Upper lobe of right lung (tissue), 1 donor: ENCODE measurements at regions of chr9 and their contacts with region 1.

Region 1: DNA sequence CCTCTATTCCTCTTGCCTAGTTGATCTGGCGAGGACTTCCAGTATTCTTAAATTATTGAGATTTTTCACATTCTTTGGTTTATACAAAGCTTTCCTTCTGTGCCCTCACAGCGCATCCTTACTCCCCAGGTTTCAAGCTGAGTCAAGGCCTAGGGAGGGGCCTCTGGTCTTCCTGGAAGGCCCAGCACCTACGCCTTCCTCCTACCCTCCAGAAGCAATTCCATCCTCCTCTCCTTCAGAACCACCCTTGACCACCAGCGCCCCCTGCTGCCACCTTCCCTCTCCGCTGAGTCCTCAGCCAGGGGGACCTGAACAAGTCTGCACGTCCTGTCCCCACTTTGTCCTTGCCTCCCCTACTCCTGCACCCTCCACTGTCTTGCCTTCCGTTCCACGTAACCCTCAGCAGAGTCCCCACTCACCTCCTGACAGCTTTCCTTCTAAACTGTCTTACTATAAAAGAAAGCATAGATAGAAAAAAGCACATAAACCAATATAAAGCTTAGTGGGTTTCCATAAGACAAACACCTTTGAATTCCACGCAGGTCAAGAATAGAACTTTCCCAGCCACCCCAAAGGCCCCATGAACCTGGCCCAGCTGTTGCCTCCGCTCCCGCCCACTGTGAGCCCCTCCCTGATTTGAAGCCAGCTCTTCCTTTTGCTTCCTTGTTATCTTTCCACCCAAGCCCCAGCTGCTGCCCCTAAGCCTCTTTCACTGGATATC is 63.0 kb upstream of the CTSL start:
- DNase-seq: peak; percentile 91
- ATAC-seq: peak; percentile 89
- H3K4me3 ChIP-seq: no peak overlapping the region
- H3K27ac ChIP-seq: no peak overlapping the region
- H3K4me1 ChIP-seq: peaks cover 11% of the 10 kb centered on the region
- H3K27me3 ChIP-seq: no peaks in the 10 kb centered on the region
- CTCF ChIP-seq: peak; percentile 68

Region 2: GRCh38 chr9:87336914-87337333 is 326.0 kb before region 1 on chr9:
- intact Hi-C with region 1: loop called (anchors 10 kb)
- DNase-seq: no peak
- ATAC-seq: peak; percentile 89
- H3K4me3 ChIP-seq: peak overlapping the region; percentile 45
- H3K27ac ChIP-seq: no peak overlapping the region
- H3K4me1 ChIP-seq: no peaks in the 10 kb centered on the region
- H3K27me3 ChIP-seq: no peaks in the 10 kb centered on the region
- CTCF ChIP-seq: peak; percentile 68